ENCODE measurements at regions of chr2 and their contacts with region 1.

Region 1: GRCh38 chr2:176653479-176654443 is 384.5 kb downstream of the MTX2 start:
- DNase-seq: peak; percentile 27 to 68 (median 49)
- ATAC-seq: peak; percentile 58 to 93 (median 84)
- H3K4me3 ChIP-seq: no peak overlapping the region
- H3K27ac ChIP-seq: no peak overlapping the region
- H3K4me1 ChIP-seq: peaks cover 0 to 8% (median 0%) of the 10 kb centered on the region in 12 donors
- H3K27me3 ChIP-seq: peaks cover 0 to 29% (median 3%) of the 10 kb centered on the region in 9 donors
- CTCF ChIP-seq: peak; percentile 31 to 74 (median 62)
- POLR2A ChIP-seq: no peak

Region 2: GRCh38 chr2:176096986-176097819 is 556.6 kb before region 1 on chr2:
- intact Hi-C with region 1: no loop called
- DNase-seq: peak; percentile 32 to 77 (median 50)
- ATAC-seq: peak; percentile 65 to 89 (median 86)
- H3K4me3 ChIP-seq: peak overlapping the region in 11 of 12 donors; percentile 9 to 52 (median 40)
- H3K27ac ChIP-seq: peak overlapping the region in 1 of 12 donors; percentile 86
- H3K4me1 ChIP-seq: peaks cover 0 to 51% (median 18%) of the 10 kb centered on the region in 12 donors
- H3K27me3 ChIP-seq: peaks cover 95 to 100% (median 99%) of the 10 kb centered on the region in 9 donors
- CTCF ChIP-seq: peak; percentile 55 to 84 (median 74)
- POLR2A ChIP-seq: no peak

Region 3: DNA sequence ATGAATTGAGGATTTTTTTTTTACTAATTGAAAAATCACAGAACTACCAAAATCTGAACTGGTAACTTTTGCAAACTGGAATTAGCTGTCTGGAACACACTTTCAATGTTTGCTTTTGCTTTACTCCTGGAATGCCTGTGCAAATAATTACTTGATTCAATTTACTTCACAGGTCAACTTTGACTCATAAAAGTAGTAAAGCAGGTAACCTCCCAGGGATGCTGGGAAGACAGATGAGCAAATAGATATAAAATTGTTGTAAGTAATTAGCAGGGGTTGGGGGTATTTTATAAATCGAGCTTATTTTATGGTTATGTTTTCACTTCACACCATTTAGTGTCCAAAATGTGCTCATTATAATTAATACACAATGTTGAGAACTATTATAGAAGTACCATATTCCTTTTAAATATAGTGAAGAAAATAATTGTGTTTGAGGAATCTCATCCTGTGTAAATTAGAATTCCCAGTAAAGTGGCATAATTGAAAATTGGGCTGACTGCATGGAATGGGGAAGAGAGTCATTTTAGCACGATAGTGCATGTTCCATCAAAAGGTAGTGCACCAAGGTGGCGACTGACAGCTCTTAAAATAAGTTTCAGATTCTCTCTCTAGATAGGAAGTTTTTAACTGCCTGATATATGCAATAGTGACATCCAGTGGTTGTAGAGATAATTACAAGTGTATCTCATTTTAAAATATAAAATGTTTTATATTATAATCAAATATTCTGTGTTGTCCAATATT is 160.7 kb after region 1 on chr2:
- intact Hi-C with region 1: loop called in 9 of 10 experiments (anchors 1 to 5 kb)
- DNase-seq: no peak
- ATAC-seq: no peak
- H3K4me3 ChIP-seq: no peak overlapping the region
- H3K27ac ChIP-seq: peak overlapping the region in 1 of 12 donors; percentile 9
- H3K4me1 ChIP-seq: peaks cover 0 to 20% (median 3%) of the 10 kb centered on the region in 12 donors
- H3K27me3 ChIP-seq: peaks cover 0 to 14% (median 0%) of the 10 kb centered on the region in 9 donors
- CTCF ChIP-seq: peak; percentile 60 to 79 (median 68)
- POLR2A ChIP-seq: no peak